Activated CD4-positive, alpha-beta T cell treated with anti-CD3 and anti-CD28 coated beads for 36 hours (primary cell): ENCODE measurements at regions of chr17 and their contacts with region 1.

Region 1: GRCh38 chr17:409848-410545 is 57.4 kb upstream of the RPH3AL start:
- DNase-seq: peak; percentile 100
- ATAC-seq: peak; percentile 71
- H3K4me3 Mint-ChIP-seq: peak overlapping the region; percentile 77
- H3K27ac Mint-ChIP-seq: peak overlapping the region; percentile 82
- H3K4me1 Mint-ChIP-seq: peaks cover 54% of the 10 kb centered on the region
- H3K27me3 Mint-ChIP-seq: peaks cover 2% of the 10 kb centered on the region

Region 2: DNA sequence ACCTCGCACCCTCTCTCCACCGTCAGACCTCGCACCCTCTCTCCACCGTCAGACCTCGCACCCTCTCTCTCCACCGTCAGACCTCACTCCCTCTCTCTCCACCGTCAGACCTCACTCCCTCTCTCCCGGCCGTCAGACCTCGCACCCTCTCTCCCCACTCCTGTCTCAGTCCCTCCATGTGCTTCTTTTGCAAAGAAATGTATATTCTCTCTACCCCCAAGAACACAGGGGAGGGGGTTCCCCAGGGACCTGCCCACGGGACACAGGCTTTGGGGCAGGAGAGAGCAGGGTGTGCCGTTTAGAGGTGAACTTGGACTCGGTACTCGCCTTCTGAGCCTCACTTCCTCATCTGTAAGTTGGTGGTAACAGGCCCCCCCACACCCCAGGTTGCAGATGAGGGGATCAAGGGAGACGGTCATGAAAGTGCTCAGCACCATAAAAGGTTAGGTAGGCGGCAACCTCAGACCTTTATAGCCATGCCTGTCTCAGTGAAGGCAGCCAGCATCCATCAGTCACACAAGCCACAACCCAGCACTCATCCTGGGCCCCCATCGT is 121.1 kb before region 1 on chr17:
- CTCF ChIA-PET with region 1: no interaction called
- POLR2A ChIA-PET with region 1: no interaction called
- intact Hi-C with region 1: no loop called
- DNase-seq: no peak
- ATAC-seq: no peak
- H3K4me3 Mint-ChIP-seq: no peak overlapping the region
- H3K27ac Mint-ChIP-seq: no peak overlapping the region
- H3K4me1 Mint-ChIP-seq: peaks cover 4% of the 10 kb centered on the region
- H3K27me3 Mint-ChIP-seq: peaks cover 4% of the 10 kb centered on the region

Region 3: DNA sequence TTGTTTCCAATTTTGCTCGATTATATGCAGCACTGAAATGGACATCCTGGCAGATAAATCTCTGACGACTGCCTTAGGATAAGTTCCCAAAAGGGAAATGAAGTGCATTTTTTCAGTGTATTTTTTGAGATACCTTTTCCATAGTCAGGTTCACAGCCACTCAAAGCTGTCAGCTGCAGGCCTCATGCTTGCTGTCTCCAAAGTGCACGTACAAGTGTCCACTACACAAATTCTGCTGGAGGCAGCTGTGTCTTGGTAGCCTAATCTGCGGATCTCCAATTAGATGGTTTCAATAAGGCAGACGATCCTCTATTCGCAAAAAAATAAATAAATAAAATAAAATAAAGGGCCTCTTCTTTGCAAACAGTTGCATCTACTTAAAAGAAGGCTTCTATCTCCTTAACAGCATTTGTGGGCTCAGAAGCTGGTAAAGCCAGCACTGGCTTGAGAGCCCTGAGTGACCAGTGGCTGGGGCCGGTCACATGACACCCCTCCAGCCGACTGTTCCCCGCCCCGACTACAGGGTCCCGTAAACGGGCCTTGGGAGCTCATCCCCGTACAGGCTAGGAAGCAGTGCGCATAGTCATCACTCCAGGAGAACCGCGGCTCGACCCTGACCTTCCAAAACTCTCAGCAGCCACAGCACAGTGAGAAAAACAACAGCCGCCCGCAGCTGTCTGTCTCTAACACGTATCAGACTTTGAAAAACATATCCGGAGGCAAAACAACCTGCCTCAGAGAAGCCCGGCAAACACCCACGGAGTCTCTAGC is 76.2 kb before region 1 on chr17:
- CTCF ChIA-PET with region 1: no interaction called
- POLR2A ChIA-PET with region 1: no interaction called
- intact Hi-C with region 1: no loop called
- DNase-seq: no peak
- ATAC-seq: no peak
- H3K4me3 Mint-ChIP-seq: no peak overlapping the region
- H3K27ac Mint-ChIP-seq: no peak overlapping the region
- H3K4me1 Mint-ChIP-seq: peaks cover 5% of the 10 kb centered on the region
- H3K27me3 Mint-ChIP-seq: no peaks in the 10 kb centered on the region

Region 4: DNA sequence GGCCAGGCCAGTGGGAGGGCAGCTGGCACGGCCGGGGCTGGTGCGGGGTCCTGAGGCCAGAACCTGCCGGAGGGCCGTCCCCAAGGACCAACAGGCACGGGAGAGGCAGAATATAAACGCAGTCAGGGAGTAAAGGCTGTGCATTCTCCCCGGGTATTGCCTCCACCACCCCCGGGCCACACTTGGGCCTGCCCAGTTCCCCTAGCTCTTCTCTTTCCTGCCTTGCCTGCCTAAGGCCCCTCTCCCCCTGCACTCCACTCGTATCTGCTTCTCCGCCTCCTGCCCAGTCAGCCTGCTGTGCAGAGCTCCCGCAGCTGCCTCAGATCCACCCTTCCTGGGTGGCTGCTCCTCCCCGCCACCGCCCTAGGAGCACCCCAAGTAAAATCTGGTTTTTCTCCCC is 52.4 kb before region 1 on chr17:
- CTCF ChIA-PET with region 1: no interaction called
- POLR2A ChIA-PET with region 1: no interaction called
- intact Hi-C with region 1: no loop called
- DNase-seq: no peak
- ATAC-seq: no peak
- H3K4me3 Mint-ChIP-seq: no peak overlapping the region
- H3K27ac Mint-ChIP-seq: no peak overlapping the region
- H3K4me1 Mint-ChIP-seq: no peaks in the 10 kb centered on the region
- H3K27me3 Mint-ChIP-seq: no peaks in the 10 kb centered on the region

Region 5: DNA sequence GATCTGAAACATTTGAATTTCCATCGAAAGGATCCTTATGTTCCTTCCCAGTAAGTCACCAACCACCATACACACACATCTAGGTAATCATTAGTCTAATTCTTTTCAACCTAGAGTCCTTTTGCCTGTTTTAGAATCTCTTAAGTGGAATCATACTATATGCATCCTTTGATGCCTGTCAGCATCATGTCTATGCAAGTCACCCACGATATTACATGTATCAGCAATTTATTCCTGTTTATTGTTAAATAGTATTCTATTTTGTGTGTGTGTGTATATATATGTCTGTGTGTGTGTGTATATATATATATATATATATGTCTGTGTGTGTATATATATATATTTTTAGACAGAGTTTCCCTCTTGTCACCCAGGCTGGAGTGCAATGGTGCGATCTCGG is 21.5 kb after region 1 on chr17:
- CTCF ChIA-PET with region 1: interaction called, 12 read pairs
- POLR2A ChIA-PET with region 1: no interaction called
- intact Hi-C with region 1: no loop called
- DNase-seq: no peak
- ATAC-seq: no peak
- H3K4me3 Mint-ChIP-seq: no peak overlapping the region
- H3K27ac Mint-ChIP-seq: no peak overlapping the region
- H3K4me1 Mint-ChIP-seq: peaks cover 5% of the 10 kb centered on the region
- H3K27me3 Mint-ChIP-seq: no peaks in the 10 kb centered on the region

Region 6: DNA sequence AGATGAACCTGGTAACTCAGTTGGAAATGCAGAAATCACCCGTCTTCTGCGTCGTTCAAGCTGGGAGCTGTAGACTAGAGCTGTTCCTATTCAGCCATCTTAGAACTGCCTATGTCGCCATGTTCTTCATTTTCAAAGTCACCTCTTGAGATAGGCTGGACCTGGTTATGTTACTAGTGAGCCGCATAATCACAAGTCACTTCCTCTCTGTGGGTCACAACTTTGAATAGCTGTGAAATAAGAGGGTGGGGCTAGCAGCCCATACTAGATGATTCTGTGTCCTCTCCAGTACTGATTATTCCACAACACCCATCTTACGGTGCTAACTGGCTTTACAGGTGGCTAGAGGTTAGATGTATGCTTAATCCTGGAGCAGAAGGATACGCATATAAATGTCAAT is 230.4 kb after region 1 on chr17:
- CTCF ChIA-PET with region 1: no interaction called
- POLR2A ChIA-PET with region 1: no interaction called
- intact Hi-C with region 1: loop called in 1 of 2 experiments (anchors 2 kb)
- DNase-seq: no peak
- ATAC-seq: no peak
- H3K4me3 Mint-ChIP-seq: no peak overlapping the region
- H3K27ac Mint-ChIP-seq: no peak overlapping the region
- H3K4me1 Mint-ChIP-seq: peaks cover 13% of the 10 kb centered on the region
- H3K27me3 Mint-ChIP-seq: no peaks in the 10 kb centered on the region

Region 7: DNA sequence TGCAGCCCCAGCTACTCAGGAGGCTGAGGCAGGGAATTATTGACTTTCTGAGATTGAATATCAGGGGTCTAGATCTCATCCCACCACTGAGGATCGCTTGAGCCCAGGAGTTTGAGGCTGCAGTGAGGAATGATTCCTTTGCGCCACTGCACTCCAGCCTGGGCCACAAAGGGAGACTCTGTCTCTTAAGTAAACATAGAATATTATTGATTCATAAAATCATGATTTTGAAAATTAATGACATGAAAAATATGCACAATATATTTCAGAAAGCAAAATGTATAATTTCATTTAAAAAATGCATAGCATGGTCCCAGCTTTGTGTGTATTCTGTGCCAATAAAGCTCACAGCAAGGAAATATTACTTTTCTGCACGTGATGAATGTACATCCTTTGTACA is 306.2 kb after region 1 on chr17:
- CTCF ChIA-PET with region 1: interaction called, 4 read pairs
- POLR2A ChIA-PET with region 1: no interaction called
- intact Hi-C with region 1: loop called in 1 of 2 experiments (anchors 1 kb)
- DNase-seq: no peak
- ATAC-seq: no peak
- H3K4me3 Mint-ChIP-seq: no peak overlapping the region
- H3K27ac Mint-ChIP-seq: no peak overlapping the region
- H3K4me1 Mint-ChIP-seq: peaks cover 26% of the 10 kb centered on the region
- H3K27me3 Mint-ChIP-seq: no peaks in the 10 kb centered on the region

Region 8: GRCh38 chr17:781805-782731 is 372.1 kb after region 1 on chr17 and contains the starts of genes GLOD4 and MRM3:
- CTCF ChIA-PET with region 1: no interaction called
- POLR2A ChIA-PET with region 1: no interaction called
- intact Hi-C with region 1: loop called in 1 of 2 experiments (anchors 1 kb)
- DNase-seq: peak; percentile 96
- ATAC-seq: peak; percentile 89
- H3K4me3 Mint-ChIP-seq: peak within 1 kb of the TSS; percentile 97
- H3K27ac Mint-ChIP-seq: peak within 1 kb of the TSS; percentile 96
- H3K4me1 Mint-ChIP-seq: peaks cover 35% of the 10 kb centered on the region
- H3K27me3 Mint-ChIP-seq: no peaks in the 10 kb centered on the region
- total RNA-seq, gene GLOD4: 59.5 to 64.0 TPM
- total RNA-seq, gene MRM3: 20.6 to 31.4 TPM